ENCODE measurements at regions of chr20 and their contacts with region 1.

Region 1: DNA sequence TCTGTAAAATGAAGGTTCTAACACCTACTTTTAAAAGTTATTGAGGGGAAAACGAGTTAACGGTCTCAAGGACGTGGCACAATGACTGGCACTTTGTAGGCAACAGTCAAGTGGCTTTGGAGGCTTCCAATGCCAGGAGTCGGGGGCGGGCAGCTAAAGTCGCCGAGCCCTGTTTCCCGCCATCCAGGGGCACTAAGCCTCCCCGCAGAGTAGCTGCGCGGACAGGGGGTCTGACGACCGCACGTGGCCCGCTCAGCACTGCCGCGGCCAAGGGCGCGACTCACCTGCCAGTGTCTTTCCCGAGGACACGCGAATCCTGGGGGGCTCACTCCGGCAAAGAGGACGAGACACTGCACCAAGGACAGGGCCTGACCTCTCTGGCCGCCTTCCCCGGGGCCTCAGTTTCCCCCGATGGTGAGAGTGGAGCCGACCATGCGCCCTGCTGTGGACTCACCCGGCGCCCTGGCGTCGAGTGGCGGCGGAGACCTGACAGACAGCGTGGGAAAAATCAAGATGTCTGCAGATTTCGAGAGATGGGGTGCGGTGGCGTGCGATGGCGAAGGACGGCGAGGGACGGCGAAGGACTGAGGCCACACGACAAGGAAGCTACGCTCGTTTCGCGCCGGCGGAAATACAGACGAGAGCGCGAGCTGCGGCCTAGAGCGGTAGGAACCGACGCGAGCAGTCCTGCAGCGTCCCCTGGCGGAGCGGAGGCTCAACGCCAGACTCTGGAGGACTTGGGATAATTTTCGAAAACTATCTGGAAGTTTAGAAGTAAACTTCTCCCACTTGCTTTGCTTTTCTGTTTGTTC is at the start of gene SNHG17:
- DNase-seq: peak; percentile 80 to 89 (median 87)
- ATAC-seq: peak; percentile 99
- H3K4me3 ChIP-seq: peak within 1 kb of the TSS; percentile 62
- H3K4me3 Mint-ChIP-seq: peak within 1 kb of the TSS; percentile 87 to 99 (median 94)
- H3K27ac ChIP-seq: peak within 1 kb of the TSS; percentile 81
- H3K27ac Mint-ChIP-seq: peak within 1 kb of the TSS; percentile 91 to 98 (median 95)
- H3K4me1 ChIP-seq: peaks cover 6 to 8% of the 10 kb centered on the region in 2 donors
- H3K4me1 Mint-ChIP-seq: peaks cover 20 to 41% (median 35%) of the 10 kb centered on the region in 7 donors
- H3K27me3 ChIP-seq: no peaks in the 10 kb centered on the region
- H3K27me3 Mint-ChIP-seq: peaks cover 0 to 9% (median 5%) of the 10 kb centered on the region in 5 donors
- total RNA-seq, gene SNHG17: 43.9 to 102 (median 52.4) TPM

Region 2: GRCh38 chr20:38446441-38447209 is 11.7 kb after region 1 on chr20:
- CTCF ChIA-PET with region 1: interaction called, 74 read pairs
- POLR2A ChIA-PET with region 1: interaction called, 109 read pairs
- intact Hi-C with region 1: loop called (anchors 1 kb)
- DNase-seq: peak; percentile 83 to 96 (median 90)
- ATAC-seq: peak; percentile 100
- H3K4me3 ChIP-seq: peak overlapping the region; percentile 94
- H3K4me3 Mint-ChIP-seq: peak overlapping the region; percentile 82 to 94 (median 86)
- H3K27ac ChIP-seq: peak overlapping the region; percentile 81
- H3K27ac Mint-ChIP-seq: peak overlapping the region; percentile 83 to 96 (median 90)
- H3K4me1 ChIP-seq: peaks cover 10 to 11% of the 10 kb centered on the region in 2 donors
- H3K4me1 Mint-ChIP-seq: peaks cover 7 to 33% (median 24%) of the 10 kb centered on the region in 7 donors
- H3K27me3 ChIP-seq: no peaks in the 10 kb centered on the region
- H3K27me3 Mint-ChIP-seq: peaks cover 0 to 12% (median 0%) of the 10 kb centered on the region in 5 donors

Region 3: DNA sequence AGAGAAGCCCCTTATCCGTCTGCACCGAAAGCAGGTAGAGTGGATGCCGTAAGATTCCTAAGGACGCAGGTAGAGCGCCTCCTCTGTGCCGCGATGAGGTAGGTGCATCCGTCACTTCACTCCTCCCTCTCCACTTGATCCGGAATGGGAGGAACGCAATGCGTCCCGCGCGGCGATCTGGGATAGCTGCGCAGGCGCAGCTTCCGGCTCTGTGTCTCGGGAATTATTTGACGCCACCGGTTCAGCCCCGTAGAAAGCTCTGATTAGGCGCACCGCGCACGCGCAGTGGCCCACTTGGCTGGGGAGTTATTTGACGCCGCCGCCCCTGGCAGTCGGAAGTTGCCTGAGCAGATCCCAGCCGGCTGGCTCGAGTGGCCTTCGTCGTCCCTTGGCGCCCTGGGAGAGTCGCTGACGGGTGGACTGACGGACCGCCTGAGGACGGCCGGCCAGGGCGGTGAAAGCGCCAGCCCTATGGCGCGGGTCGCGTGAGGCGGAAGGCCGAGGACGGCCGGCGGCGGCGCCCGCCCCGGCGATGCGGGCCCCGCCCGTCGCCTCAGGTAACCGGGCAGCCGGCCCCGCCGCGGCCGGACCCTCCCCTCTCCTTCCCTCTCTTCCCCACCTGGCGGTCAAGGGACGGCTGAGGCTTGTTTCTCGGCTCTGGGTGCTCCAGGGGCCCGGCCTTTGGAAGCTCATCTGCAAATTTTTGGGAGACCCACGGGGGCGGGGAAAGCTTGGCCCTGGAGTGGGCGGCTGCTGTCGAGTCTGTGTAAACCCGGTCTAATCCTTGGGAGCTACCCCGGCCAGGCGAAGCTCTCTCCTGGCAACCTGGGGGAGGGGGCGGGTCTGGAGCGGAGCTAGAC is 37.8 kb after region 1 on chr20 and contains the start of gene RALGAPB:
- CTCF ChIA-PET with region 1: interaction called, 9 read pairs
- POLR2A ChIA-PET with region 1: interaction called, 25 read pairs
- intact Hi-C with region 1: loop called (anchors 1 kb)
- DNase-seq: peak; percentile 96 to 99 (median 98)
- ATAC-seq: peak; percentile 95
- H3K4me3 ChIP-seq: peak within 1 kb of the TSS; percentile 57
- H3K4me3 Mint-ChIP-seq: peak within 1 kb of the TSS; percentile 87 to 94 (median 92)
- H3K27ac ChIP-seq: peak within 1 kb of the TSS; percentile 80
- H3K27ac Mint-ChIP-seq: peak within 1 kb of the TSS; percentile 87 to 97 (median 94)
- H3K4me1 ChIP-seq: peaks cover 21 to 24% of the 10 kb centered on the region in 2 donors
- H3K4me1 Mint-ChIP-seq: peaks cover 37 to 57% (median 52%) of the 10 kb centered on the region in 7 donors
- H3K27me3 ChIP-seq: no peaks in the 10 kb centered on the region
- H3K27me3 Mint-ChIP-seq: peaks cover 0 to 14% (median 0%) of the 10 kb centered on the region in 5 donors
- total RNA-seq, gene RALGAPB: 36.8 to 50.4 (median 41.8) TPM

Measured in naive thymus-derived CD4-positive, alpha-beta T cell (primary cell).